Prostate gland (tissue), 2 donors: ENCODE measurements at regions of chr11 and their contacts with region 1.

Region 1: GRCh38 chr11:112795142-112795815 is 165.9 kb upstream of the NCAM1 start:
- DNase-seq: no peak
- H3K4me3 ChIP-seq: no peak overlapping the region
- H3K27ac ChIP-seq: no peak overlapping the region
- H3K4me1 ChIP-seq: no peaks in the 10 kb centered on the region
- H3K27me3 ChIP-seq: no peaks in the 10 kb centered on the region
- CTCF ChIP-seq: peak in 3 of 4 experiments; percentile 28 to 50 (median 36)
- POLR2A ChIP-seq: no peak

Region 2: DNA sequence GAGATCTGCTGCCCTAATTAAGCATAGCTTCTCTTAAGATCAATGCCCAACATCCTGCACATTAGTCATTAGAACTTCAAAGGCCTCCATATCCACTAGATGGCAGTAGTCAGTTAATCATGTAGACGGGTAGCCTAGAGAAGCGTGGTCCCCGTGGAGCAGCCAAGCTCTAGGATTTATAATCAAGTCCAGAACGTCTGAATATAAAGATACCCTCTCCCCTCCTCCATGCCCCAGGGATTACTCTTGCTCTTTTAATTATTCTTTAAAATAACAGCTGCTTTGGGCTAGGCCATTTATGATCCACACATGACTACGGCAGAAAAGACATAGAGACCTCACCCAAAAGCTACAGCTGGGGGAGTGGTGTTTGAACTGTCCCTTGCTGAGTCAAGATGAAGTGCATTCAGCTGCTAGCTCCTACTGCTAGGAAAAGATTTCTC is 207.0 kb before region 1 on chr11:
- intact Hi-C with region 1: loop called (anchors 5 kb)
- DNase-seq: peak; percentile 63
- H3K4me3 ChIP-seq: no peak overlapping the region
- H3K27ac ChIP-seq: no peak overlapping the region
- H3K4me1 ChIP-seq: no peaks in the 10 kb centered on the region
- H3K27me3 ChIP-seq: no peaks in the 10 kb centered on the region
- CTCF ChIP-seq: peak; percentile 32 to 77 (median 68)
- POLR2A ChIP-seq: no peak

Region 3: DNA sequence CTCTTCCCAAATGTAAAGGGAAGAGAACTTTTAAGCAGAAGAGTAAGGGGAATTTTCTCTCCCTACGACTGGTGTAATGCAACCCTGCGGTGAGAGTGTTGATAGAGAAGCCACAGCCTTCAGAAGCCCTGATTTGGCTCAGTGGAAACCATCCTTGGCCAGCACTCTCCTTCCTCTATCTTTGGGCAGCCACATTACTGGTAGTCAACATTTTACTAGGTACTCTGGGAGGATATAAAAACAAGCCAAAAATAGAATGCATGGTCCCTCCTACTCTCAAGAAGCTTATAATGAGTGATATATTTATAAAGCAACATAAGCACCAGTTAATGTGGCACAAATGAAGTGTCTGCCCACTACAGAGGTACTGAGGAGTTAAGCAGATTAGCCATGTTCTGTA is 35.9 kb before region 1 on chr11:
- intact Hi-C with region 1: loop called (anchors 5 kb)
- DNase-seq: no peak
- H3K4me3 ChIP-seq: no peak overlapping the region
- H3K27ac ChIP-seq: no peak overlapping the region
- H3K4me1 ChIP-seq: no peaks in the 10 kb centered on the region
- H3K27me3 ChIP-seq: no peaks in the 10 kb centered on the region
- CTCF ChIP-seq: no peak
- POLR2A ChIP-seq: no peak

Region 4: GRCh38 chr11:112961146-112961668 is 165.9 kb after region 1 on chr11 and contains the start of gene NCAM1:
- intact Hi-C with region 1: loop called (anchors 5 kb)
- DNase-seq: no peak
- H3K4me3 ChIP-seq: peak within 1 kb of the TSS; percentile 31 to 36
- H3K27ac ChIP-seq: no peak within 1 kb of the TSS
- H3K4me1 ChIP-seq: no peaks in the 10 kb centered on the region
- H3K27me3 ChIP-seq: peaks cover 14% of the 10 kb centered on the region
- CTCF ChIP-seq: no peak
- POLR2A ChIP-seq: no peak
- total RNA-seq, gene NCAM1: 3.8 to 39.7 TPM

Region 5: DNA sequence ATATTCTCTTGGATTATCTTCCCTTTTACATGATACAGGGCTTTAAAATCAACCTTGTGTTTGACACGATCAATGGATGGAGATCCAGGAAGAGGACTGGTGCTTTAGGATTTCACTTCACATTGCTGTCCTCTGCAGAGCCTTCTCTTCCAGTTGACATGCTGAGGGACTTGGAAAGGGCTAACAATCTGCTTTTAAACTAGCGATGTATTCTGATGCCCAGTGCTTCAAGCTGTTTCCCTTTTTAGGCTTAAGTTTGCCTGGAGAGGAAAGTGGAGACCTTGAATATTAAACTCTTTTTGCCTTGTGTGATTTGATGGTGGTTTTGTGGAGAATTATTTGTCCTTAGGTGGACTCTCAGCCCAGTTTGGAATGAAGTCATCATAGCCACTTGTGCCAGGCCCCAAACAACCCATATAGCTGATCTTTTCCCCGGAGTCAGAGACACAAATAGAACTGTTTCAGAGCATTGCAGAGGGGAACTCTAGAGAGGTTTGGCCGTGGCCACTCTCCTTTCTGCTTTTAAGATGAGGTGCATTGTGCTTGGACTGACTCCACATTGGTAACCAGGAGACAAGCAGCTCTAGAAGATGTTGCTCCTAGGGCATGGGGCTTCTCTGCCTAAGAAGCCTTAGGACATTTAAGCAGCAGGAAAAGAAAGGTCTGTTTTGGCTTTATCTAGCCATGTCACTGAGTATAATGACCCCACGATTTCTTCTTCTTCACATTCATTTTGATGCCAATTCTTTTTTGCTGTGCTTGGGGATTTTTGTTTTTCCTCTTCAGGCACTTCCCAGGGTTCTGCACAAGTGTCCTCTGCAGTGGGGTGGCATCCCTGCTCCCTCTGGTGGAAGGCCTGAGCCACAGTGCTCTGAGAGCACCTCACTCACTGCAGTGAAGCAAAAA is 318.8 kb after region 1 on chr11:
- intact Hi-C with region 1: loop called (anchors 5 kb)
- DNase-seq: peak; percentile 27
- H3K4me3 ChIP-seq: no peak overlapping the region
- H3K27ac ChIP-seq: no peak overlapping the region
- H3K4me1 ChIP-seq: no peaks in the 10 kb centered on the region
- H3K27me3 ChIP-seq: no peaks in the 10 kb centered on the region
- CTCF ChIP-seq: peak; percentile 29 to 80 (median 64)
- POLR2A ChIP-seq: no peak

Region 6: DNA sequence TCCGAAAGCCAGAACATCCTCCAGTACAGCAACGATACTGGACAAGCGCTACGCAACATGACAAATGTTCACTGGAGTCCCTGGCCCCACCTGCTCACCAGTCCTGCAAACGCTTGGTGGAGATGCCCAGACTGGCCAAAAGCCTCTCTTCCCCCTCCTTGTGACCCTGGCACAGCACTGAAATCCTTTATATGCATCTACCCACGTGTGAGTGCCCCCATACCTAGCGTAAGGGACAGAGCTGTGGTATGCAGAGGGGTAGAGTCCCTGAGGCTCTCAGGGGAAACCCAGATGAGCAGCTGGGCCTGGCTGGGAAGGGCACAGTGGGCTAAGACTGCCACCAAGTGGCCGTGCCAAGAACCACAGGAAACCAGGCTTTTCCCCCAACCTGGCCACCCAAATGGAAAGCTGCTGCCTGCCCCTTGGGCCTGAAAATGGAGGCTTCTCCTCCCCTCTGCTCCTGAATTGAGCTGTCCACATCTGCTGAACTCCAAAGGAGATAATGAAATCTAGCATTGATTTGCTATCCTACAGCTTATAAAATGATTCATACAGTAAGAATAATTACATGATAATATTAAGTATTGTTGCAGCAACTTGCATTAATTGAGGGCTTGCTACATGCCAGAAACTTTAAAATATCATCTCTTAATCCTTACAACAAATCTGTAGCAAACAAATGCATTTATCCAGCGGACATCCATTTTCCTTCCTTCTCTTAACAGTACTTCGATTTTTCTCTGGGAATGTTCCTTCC is 494.3 kb after region 1 on chr11:
- intact Hi-C with region 1: loop called (anchors 10 kb)
- DNase-seq: peak; percentile 27
- H3K4me3 ChIP-seq: no peak overlapping the region
- H3K27ac ChIP-seq: no peak overlapping the region
- H3K4me1 ChIP-seq: no peaks in the 10 kb centered on the region
- H3K27me3 ChIP-seq: no peaks in the 10 kb centered on the region
- CTCF ChIP-seq: peak; percentile 71 to 85 (median 81)
- POLR2A ChIP-seq: no peak